ENCODE measurements at regions of chr9 and their contacts with region 1.

Region 1: GRCh38 chr9:10268531-10269485 is 344.0 kb downstream of the PTPRD start:
- DNase-seq: peak; percentile 64
- ATAC-seq: peak; percentile 98
- H3K4me3 Mint-ChIP-seq: no peak overlapping the region
- H3K27ac Mint-ChIP-seq: no peak overlapping the region
- H3K4me1 Mint-ChIP-seq: peaks cover 6% of the 10 kb centered on the region; the same call in 1 of the 2 replicates
- H3K27me3 Mint-ChIP-seq: no peaks in the 10 kb centered on the region
- CTCF ChIP-seq: peak; percentile 33; the same call in 1 of the 2 replicates

Region 2: DNA sequence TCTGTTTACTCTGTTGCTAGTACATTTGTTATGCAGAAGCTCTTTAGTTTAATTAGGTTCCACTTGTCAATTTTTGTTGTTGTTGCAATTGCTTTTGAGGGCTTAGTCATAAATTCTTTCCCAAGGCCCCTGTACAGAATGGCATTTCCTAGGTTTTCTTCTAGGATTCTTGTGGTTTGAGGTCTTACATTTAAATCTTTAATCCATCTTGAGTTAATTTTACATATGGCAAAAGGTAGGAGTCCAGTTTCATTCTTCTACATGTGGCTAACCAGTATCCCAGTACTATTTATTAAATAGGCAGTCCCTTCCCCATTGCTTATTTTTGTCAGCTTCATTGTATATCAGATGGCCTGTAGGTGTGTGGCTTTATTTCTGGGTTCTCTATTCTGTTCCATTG is 448.4 kb before region 1 on chr9:
- CTCF ChIA-PET with region 1: no interaction called
- POLR2A ChIA-PET with region 1: no interaction called
- DNase-seq: no peak
- ATAC-seq: no peak
- H3K4me3 Mint-ChIP-seq: no peak overlapping the region
- H3K27ac Mint-ChIP-seq: no peak overlapping the region
- H3K4me1 Mint-ChIP-seq: no peaks in the 10 kb centered on the region
- H3K27me3 Mint-ChIP-seq: no peaks in the 10 kb centered on the region
- CTCF ChIP-seq: no peak

Region 3: GRCh38 chr9:9998491-9999287 is 270.1 kb before region 1 on chr9:
- CTCF ChIA-PET with region 1: interaction called, 13 read pairs
- POLR2A ChIA-PET with region 1: no interaction called
- DNase-seq: no peak
- ATAC-seq: peak; percentile 50
- H3K4me3 Mint-ChIP-seq: no peak overlapping the region
- H3K27ac Mint-ChIP-seq: peak overlapping the region; percentile 91
- H3K4me1 Mint-ChIP-seq: peaks cover 66% of the 10 kb centered on the region
- H3K27me3 Mint-ChIP-seq: no peaks in the 10 kb centered on the region
- CTCF ChIP-seq: peak; percentile 59; the same call in 1 of the 2 replicates

Region 4: GRCh38 chr9:10045598-10045997 is 223.2 kb before region 1 on chr9:
- CTCF ChIA-PET with region 1: interaction called, 35 read pairs
- POLR2A ChIA-PET with region 1: no interaction called
- DNase-seq: no peak
- ATAC-seq: no peak
- H3K4me3 Mint-ChIP-seq: no peak overlapping the region
- H3K27ac Mint-ChIP-seq: no peak overlapping the region
- H3K4me1 Mint-ChIP-seq: peaks cover 3% of the 10 kb centered on the region; the same call in 1 of the 2 replicates
- H3K27me3 Mint-ChIP-seq: no peaks in the 10 kb centered on the region
- CTCF ChIP-seq: no peak

Region 5: GRCh38 chr9:10059044-10059443 is 209.8 kb before region 1 on chr9:
- CTCF ChIA-PET with region 1: interaction called, 20 read pairs
- POLR2A ChIA-PET with region 1: no interaction called
- DNase-seq: no peak
- ATAC-seq: no peak
- H3K4me3 Mint-ChIP-seq: no peak overlapping the region
- H3K27ac Mint-ChIP-seq: no peak overlapping the region
- H3K4me1 Mint-ChIP-seq: peaks cover 26% of the 10 kb centered on the region
- H3K27me3 Mint-ChIP-seq: peaks cover 30% of the 10 kb centered on the region
- CTCF ChIP-seq: no peak

Region 6: GRCh38 chr9:10346765-10347164 is 78.0 kb after region 1 on chr9:
- CTCF ChIA-PET with region 1: no interaction called
- POLR2A ChIA-PET with region 1: no interaction called
- DNase-seq: no peak
- ATAC-seq: no peak
- H3K4me3 Mint-ChIP-seq: no peak overlapping the region
- H3K27ac Mint-ChIP-seq: no peak overlapping the region
- H3K4me1 Mint-ChIP-seq: peaks cover 4% of the 10 kb centered on the region; the same call in 1 of the 2 replicates
- H3K27me3 Mint-ChIP-seq: peaks cover 2% of the 10 kb centered on the region; the same call in 1 of the 2 replicates
- CTCF ChIP-seq: no peak